ENCODE measurements at regions of chr7 and their contacts with region 1.

Region 1: GRCh38 chr7:5704534-5704922 is 76.9 kb downstream of the RNF216 start:
- DNase-seq: no peak
- ATAC-seq: peak; percentile 13; the same call in 2 of the 3 replicates
- H3K4me3 ChIP-seq: no peak overlapping the region
- H3K27ac ChIP-seq: peak overlapping the region; percentile 59; the same call in 1 of the 2 replicates
- H3K4me1 ChIP-seq: peaks cover 58% of the 10 kb centered on the region
- H3K27me3 ChIP-seq: no peaks in the 10 kb centered on the region
- CTCF ChIP-seq: peak; percentile 87 to 96 (median 95); a peak in 5 of 6 replicates
- EP300 ChIP-seq: no peak
- POLR2A ChIP-seq: no peak
- RAD21 ChIP-seq: peak; percentile 95

Region 2: GRCh38 chr7:5363729-5364128 is 340.8 kb before region 1 on chr7:
- CTCF ChIA-PET with region 1: interaction called, 7 read pairs
- POLR2A ChIA-PET with region 1: no interaction called
- RAD21 ChIA-PET with region 1: no interaction called
- SMC1A ChIA-PET with region 1: no interaction called
- in situ Hi-C with region 1: no loop called
- intact Hi-C with region 1: loop called (anchors 10 kb)
- DNase-seq: no peak
- ATAC-seq: peak; percentile 38; the same call in 2 of the 3 replicates
- H3K4me3 ChIP-seq: peak overlapping the region; percentile 16; the same call in 1 of the 2 replicates
- H3K27ac ChIP-seq: no peak overlapping the region
- H3K4me1 ChIP-seq: peaks cover 16% of the 10 kb centered on the region
- H3K27me3 ChIP-seq: no peaks in the 10 kb centered on the region
- CTCF ChIP-seq: no peak
- EP300 ChIP-seq: no peak
- POLR2A ChIP-seq: no peak
- RAD21 ChIP-seq: no peak

Region 3: GRCh38 chr7:5387711-5388245 is 316.8 kb before region 1 on chr7:
- CTCF ChIA-PET with region 1: no interaction called
- POLR2A ChIA-PET with region 1: no interaction called
- RAD21 ChIA-PET with region 1: no interaction called
- SMC1A ChIA-PET with region 1: no interaction called
- in situ Hi-C with region 1: no loop called
- intact Hi-C with region 1: no loop called
- DNase-seq: no peak
- ATAC-seq: no peak
- H3K4me3 ChIP-seq: no peak overlapping the region
- H3K27ac ChIP-seq: no peak overlapping the region
- H3K4me1 ChIP-seq: no peaks in the 10 kb centered on the region
- H3K27me3 ChIP-seq: no peaks in the 10 kb centered on the region
- CTCF ChIP-seq: no peak
- EP300 ChIP-seq: no peak
- POLR2A ChIP-seq: no peak
- RAD21 ChIP-seq: no peak

Region 4: DNA sequence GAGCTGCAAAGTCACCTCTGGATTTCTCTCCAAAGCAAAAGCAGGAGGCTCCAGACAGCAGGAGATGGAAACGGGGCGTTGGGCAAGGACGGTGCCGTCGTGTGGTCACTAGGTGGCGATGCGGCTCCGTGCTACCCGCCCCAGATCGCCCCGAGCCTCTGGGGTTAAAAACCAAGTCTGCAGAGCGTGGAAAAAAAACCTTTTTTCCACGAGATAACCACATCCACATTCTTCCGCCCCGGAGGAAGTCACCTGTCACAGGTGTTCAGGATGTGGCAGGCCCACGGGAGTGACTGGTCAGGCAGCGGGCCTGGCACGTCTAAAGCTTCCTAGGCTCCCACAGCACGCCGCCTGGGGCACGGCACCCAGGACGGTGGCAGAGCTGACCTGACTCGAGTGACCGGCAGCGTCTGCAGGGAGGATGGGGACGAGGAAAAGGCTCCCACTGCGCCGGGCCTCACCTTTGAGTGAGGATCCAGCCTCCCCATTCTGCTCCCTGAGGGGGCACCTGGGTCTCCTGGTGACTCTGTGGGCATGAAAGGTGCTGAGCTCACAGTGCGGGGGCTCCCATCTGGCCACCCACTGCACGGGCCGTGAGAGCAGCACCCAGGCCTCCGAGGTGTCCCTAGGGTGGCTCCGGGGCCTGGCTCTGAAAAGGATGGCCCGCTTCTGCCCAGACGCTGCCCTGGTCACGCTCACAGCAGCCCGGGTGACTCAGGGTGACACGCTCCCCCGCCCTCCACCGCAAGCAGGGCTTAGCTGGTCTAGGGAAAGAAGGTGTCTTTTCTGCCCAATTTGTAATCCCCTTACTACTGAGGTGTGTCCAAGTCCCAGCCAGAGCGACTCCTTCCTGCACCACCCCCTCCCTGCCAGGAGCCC is 209.6 kb before region 1 on chr7:
- CTCF ChIA-PET with region 1: interaction called, 93 read pairs
- POLR2A ChIA-PET with region 1: interaction called, 14 read pairs
- RAD21 ChIA-PET with region 1: interaction called, 44 read pairs
- SMC1A ChIA-PET with region 1: interaction called, 24 read pairs
- in situ Hi-C with region 1: loop called (anchors 10 kb)
- intact Hi-C with region 1: loop called (anchors 1 kb)
- DNase-seq: no peak
- ATAC-seq: peak; percentile 94
- H3K4me3 ChIP-seq: peak overlapping the region; percentile 53; the same call in 1 of the 2 replicates
- H3K27ac ChIP-seq: no peak overlapping the region
- H3K4me1 ChIP-seq: peaks cover 12% of the 10 kb centered on the region
- H3K27me3 ChIP-seq: no peaks in the 10 kb centered on the region
- CTCF ChIP-seq: peak; percentile 94 to 99 (median 96); a peak in 5 of 6 replicates
- EP300 ChIP-seq: peak in 1 of 2 experiments; percentile 24; a peak in 1 of 4 replicates
- POLR2A ChIP-seq: peak; percentile 21; the same call in 1 of the 2 replicates
- RAD21 ChIP-seq: peak; percentile 88

Region 5: DNA sequence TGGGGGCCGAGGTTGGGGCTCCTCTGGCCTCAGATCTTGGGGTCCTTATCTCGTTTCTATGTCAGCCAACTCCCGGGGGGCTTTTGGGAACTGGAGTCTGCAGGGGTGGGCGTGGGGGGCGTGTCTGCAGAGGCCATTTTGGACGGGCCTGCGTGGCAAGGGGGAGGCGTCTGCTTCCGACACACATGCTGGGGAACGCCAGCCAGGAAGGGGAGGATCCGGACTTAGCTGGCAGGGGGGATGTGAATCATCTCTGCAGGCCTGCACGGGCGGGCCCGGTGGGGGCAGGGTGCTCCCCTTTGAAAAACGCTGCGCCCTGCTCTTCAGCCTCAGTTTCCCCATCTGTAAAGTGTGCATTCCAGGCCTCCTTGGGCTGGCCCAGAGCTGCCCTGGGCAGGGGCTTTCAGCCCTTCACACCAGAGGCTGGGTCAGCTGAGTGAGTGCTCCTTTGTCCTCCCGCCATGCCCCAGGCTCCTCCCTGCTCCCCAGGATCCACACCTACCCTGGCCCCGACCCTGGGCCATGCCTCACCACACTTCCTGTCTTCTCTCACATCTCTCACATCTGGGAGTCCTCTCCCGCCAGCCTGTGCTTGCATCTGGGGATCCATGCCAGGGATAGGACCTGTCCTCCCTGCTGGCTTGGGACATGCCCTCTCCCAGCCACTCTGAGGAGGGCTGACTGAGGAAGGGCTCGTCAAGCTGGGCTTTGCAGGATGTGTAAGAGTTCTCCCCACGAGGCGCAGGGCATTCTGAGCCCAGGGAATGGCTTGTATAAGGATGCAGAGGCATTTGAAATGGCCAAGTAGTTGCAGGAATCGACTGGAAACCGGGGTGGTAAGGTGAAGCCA is 108.3 kb before region 1 on chr7:
- CTCF ChIA-PET with region 1: interaction called, 6 read pairs
- POLR2A ChIA-PET with region 1: interaction called, 3 read pairs
- RAD21 ChIA-PET with region 1: interaction called, 10 read pairs
- SMC1A ChIA-PET with region 1: interaction called, 9 read pairs
- in situ Hi-C with region 1: no loop called
- intact Hi-C with region 1: no loop called
- DNase-seq: no peak
- ATAC-seq: peak; percentile 55
- H3K4me3 ChIP-seq: peak overlapping the region; percentile 99
- H3K27ac ChIP-seq: peak overlapping the region; percentile 79
- H3K4me1 ChIP-seq: peaks cover 37% of the 10 kb centered on the region
- H3K27me3 ChIP-seq: no peaks in the 10 kb centered on the region
- CTCF ChIP-seq: no peak
- EP300 ChIP-seq: no peak
- POLR2A ChIP-seq: peak; percentile 43; the same call in 1 of the 2 replicates
- RAD21 ChIP-seq: no peak

Region 6: GRCh38 chr7:5665094-5666025 is 39.2 kb before region 1 on chr7:
- CTCF ChIA-PET with region 1: interaction called, 407 read pairs
- POLR2A ChIA-PET with region 1: interaction called, 6 read pairs
- RAD21 ChIA-PET with region 1: interaction called, 78 read pairs
- SMC1A ChIA-PET with region 1: interaction called, 131 read pairs
- in situ Hi-C with region 1: no loop called
- intact Hi-C with region 1: loop called (anchors 1 kb)
- DNase-seq: peak; percentile 53
- ATAC-seq: peak; percentile 94
- H3K4me3 ChIP-seq: no peak overlapping the region
- H3K27ac ChIP-seq: no peak overlapping the region
- H3K4me1 ChIP-seq: peaks cover 12% of the 10 kb centered on the region
- H3K27me3 ChIP-seq: no peaks in the 10 kb centered on the region
- CTCF ChIP-seq: peak; percentile 71 to 90 (median 82)
- EP300 ChIP-seq: no peak
- POLR2A ChIP-seq: no peak
- RAD21 ChIP-seq: peak; percentile 88

Region 7: GRCh38 chr7:5689118-5689517 is 15.4 kb before region 1 on chr7:
- CTCF ChIA-PET with region 1: interaction called, 407 read pairs
- POLR2A ChIA-PET with region 1: interaction called, 39 read pairs
- RAD21 ChIA-PET with region 1: interaction called, 19 read pairs
- SMC1A ChIA-PET with region 1: interaction called, 60 read pairs
- in situ Hi-C with region 1: no loop called
- intact Hi-C with region 1: no loop called
- DNase-seq: no peak
- ATAC-seq: no peak
- H3K4me3 ChIP-seq: no peak overlapping the region; the same call in 1 of the 2 replicates
- H3K27ac ChIP-seq: peak overlapping the region; percentile 59; the same call in 1 of the 2 replicates
- H3K4me1 ChIP-seq: peaks cover 46% of the 10 kb centered on the region
- H3K27me3 ChIP-seq: no peaks in the 10 kb centered on the region
- CTCF ChIP-seq: no peak
- EP300 ChIP-seq: no peak
- POLR2A ChIP-seq: no peak
- RAD21 ChIP-seq: no peak

Measured in GM12878 (cell line).